ENCODE measurements at regions of chr4 and their contacts with region 1.

Region 1: DNA sequence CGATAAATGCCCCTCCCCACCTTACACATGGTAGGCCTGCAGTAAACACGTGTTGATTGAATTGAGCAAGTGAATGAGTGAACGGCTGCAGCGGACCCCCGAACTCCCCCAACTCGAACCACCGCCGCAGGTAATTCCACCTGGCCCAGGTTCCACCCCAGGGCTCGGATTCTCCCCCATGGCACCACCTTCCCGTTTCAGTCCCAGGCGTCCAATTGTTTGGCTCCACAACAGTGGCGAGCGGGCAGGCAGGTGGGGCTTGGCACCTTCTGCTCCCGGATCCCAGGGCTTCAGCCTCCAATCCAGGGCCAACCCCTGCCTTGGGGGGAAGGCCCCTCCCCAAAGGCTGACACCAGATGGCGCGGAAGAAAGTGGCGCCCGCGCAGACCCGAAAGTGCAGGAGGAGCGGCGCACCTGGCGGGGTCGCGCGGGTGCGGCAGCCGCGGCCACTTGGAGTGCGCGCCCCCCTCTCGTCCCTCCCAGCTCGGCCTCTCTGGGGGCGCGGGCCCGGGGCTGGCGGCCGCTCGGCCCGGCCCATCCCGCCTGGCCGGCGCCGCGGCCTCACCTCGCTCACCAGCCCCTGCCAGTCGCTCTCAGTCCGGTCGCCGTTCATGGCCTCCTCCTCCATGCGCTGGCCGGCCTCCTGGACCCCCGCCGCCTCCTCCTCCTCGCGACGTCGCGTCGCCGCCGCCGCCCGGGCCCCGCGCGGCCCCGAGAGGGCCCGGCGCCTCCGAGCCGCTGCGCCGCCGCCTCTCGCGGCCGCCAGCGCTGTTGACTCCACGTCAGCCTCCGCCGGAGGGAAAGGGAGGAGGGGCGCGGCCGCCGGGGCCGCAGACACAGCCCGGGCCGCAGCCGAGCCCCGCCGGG is at the start of gene CCDC149:
- DNase-seq: peak; percentile 43
- H3K4me3 ChIP-seq: peak within 1 kb of the TSS; percentile 44 to 73 (median 50)
- H3K27ac ChIP-seq: peak within 1 kb of the TSS; percentile 13
- H3K4me1 ChIP-seq: peaks cover 5% of the 10 kb centered on the region
- H3K27me3 ChIP-seq: peaks cover 0 to 2% of the 10 kb centered on the region in 2 experiments
- CTCF ChIP-seq: no peak
- POLR2A ChIP-seq: no peak
- total RNA-seq, gene CCDC149: 11.3 and 12.5 TPM in 2 replicates

Region 2: DNA sequence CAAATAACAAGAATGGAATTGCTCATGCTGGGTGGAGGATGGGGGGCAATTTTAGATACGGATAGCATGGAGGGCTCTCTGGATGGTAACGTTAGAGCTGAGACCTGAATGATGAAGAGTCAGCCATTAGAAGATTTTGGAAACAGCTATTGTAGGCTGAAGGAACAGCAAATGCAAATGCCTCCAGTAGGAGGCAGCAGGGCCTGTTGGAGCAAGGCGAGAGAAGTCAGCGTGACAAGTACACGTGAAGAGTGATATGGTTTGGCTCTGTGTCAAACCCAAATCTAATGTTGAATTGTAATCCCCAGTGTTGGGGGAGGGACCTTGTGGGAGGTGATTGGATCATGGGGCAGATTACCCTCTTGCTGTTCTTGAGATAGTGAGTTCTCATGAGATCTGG is 176.4 kb before region 1 on chr4:
- CTCF ChIA-PET with region 1: interaction called, 5 read pairs
- POLR2A ChIA-PET with region 1: no interaction called
- dilution Hi-C with region 1: no loop called
- intact Hi-C with region 1: loop called (anchors 1 kb)
- DNase-seq: peak; percentile 40
- H3K4me3 ChIP-seq: no peak overlapping the region
- H3K27ac ChIP-seq: no peak overlapping the region
- H3K4me1 ChIP-seq: no peaks in the 10 kb centered on the region
- H3K27me3 ChIP-seq: no peaks in the 10 kb centered on the region
- CTCF ChIP-seq: peak; percentile 27 to 46
- POLR2A ChIP-seq: no peak

Region 3: DNA sequence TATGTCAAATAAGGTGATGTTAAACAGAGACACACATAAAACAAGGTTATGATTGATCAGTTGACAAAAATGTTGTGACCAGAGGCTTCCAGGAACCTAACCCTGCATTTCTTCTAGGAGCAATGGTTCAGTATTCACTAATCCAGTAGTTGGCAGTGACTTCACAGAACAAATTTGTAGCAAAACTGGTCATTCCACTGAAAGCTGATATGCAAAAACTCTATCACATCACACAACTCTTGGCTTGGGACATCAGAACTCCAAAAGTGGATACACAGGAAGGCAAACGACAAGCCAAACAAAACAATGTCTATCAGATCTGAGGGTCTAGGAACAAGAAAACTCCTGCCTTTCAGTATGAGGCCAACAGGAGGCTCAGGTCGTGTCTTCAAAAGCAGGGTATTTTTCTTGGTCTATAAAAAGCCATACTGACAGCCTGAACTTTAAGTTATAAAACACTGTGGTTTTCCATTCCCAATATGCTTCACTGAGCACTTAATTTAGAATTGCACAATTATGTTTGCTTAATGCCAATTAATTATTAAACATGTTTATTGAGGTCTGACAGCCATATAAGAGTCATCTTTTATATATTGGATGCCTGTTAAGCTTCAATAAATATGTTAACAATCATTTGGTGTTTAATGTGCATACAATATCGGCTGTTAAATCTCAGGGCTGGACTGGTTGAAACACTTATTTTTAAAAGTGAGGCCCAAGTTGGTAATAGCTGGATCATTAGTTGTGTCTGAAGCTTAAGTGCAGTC is 71.5 kb before region 1 on chr4:
- CTCF ChIA-PET with region 1: interaction called, 3 read pairs
- POLR2A ChIA-PET with region 1: no interaction called
- dilution Hi-C with region 1: no loop called
- intact Hi-C with region 1: loop called (anchors 5 kb)
- DNase-seq: no peak
- H3K4me3 ChIP-seq: no peak overlapping the region
- H3K27ac ChIP-seq: no peak overlapping the region
- H3K4me1 ChIP-seq: peaks cover 15% of the 10 kb centered on the region
- H3K27me3 ChIP-seq: no peaks in the 10 kb centered on the region
- CTCF ChIP-seq: no peak
- POLR2A ChIP-seq: no peak

Region 4: DNA sequence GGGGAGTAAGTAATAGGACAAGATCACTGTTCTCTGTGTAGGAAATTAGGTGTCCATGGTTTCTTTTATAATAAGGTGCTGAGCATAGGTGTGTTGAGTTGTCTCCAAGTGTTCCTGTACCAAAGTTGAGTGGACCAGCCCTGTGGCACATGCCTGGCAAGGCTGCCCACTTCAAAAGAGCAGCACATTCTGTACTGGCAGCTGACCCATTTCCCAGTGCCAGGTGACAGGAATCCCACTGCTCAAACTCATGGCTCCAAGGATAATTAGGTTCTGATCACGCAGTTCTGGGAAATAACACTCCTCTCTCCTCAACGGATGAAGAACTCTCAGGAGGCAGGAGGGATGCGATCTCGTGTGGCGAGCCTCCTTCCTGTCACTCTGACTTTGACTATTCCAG is 131.1 kb after region 1 on chr4:
- CTCF ChIA-PET with region 1: no interaction called
- POLR2A ChIA-PET with region 1: no interaction called
- dilution Hi-C with region 1: no loop called
- intact Hi-C with region 1: loop called (anchors 10 kb)
- DNase-seq: no peak
- H3K4me3 ChIP-seq: no peak overlapping the region
- H3K27ac ChIP-seq: no peak overlapping the region
- H3K4me1 ChIP-seq: no peaks in the 10 kb centered on the region
- H3K27me3 ChIP-seq: peaks cover 5 to 18% of the 10 kb centered on the region in 2 experiments
- CTCF ChIP-seq: no peak
- POLR2A ChIP-seq: no peak

Measured in endothelial cell of umbilical vein (primary cell).